ENCODE measurements at regions of chr12 and their contacts with region 1.

Region 1: DNA sequence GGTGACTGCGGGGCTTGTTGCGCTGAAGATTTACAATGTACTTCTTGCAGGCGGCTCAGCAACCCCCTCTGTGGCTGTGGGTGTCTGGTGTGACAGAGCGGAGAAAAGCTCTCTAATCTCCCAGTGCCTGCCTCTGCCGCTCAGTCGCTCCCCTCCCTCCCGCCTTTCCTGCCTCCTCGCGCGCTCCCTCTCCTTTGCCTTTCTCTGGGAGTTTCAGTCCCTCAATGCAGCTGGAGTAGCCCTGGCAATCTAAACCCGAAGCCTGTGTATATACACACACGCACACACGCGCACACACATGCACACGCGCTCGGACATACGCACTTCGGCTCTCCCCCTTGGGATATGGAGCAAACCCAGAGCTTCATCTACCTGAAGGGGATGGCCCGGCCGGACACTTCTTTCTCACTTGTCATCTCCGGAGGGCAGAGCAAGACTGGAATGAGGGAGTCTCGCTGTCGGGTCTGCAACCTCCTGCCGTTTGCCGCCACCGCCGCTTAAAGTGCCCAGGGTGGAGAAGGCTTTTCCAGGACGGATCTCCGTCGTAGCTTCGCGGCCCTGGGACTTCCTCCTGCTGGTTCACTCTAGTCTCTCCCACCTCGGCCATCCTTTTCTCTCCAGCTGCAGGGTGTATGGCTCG is 599 bp upstream of the TRHDE start:
- DNase-seq: peak; percentile 63
- ATAC-seq: peak; percentile 32
- H3K4me3 ChIP-seq: peak overlapping the region; percentile 92
- H3K27ac ChIP-seq: peak overlapping the region; percentile 99
- H3K4me1 ChIP-seq: peaks cover 5% of the 10 kb centered on the region
- H3K27me3 ChIP-seq: no peaks in the 10 kb centered on the region
- CTCF ChIP-seq: peak; percentile 23; the same call in 1 of the 2 replicates
- POLR2A ChIP-seq: no peak
- RAD21 ChIP-seq: no peak

Region 2: DNA sequence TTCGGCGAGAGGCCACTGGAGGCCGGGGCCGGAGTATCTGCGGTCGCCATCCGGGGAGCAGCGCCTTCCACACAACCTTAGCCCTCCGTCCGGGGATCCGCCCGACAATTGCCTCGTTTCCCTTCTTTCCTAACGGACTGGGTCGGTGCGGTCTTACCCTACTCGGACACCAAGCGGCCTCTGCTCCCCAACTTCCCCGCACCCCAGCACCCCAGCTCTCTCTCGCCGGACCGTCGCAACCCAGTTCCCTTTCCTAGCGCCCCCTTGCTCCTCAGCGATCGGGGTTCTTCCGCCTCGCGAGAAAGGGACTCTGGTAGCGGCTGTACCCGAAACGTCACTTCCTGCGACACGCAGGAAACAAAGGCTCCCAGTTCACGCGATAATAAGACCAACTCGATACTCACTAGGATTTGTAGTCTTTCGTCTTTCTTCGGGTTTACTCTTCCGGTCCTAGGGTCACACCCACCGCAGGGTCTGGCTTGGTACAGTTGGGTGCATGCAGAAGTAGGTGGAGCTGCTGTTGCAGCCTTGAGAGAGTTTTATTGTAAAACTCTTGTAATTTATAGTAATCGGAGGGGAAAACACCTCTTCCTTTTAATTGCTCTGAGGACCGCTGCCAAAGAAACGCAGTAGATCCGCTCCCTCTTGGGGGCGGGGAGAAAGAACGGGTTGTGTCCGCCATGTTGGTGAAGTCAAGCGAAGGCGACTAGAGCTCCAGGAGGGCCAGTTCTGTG is 607.8 kb before region 1 on chr12 and contains the start of gene ZFC3H1:
- CTCF ChIA-PET with region 1: no interaction called
- POLR2A ChIA-PET with region 1: no interaction called
- dilution Hi-C with region 1: no loop called
- in situ Hi-C with region 1: loop called (anchors 25 kb)
- intact Hi-C with region 1: no loop called
- DNase-seq: peak; percentile 100
- ATAC-seq: peak; percentile 91
- H3K4me3 ChIP-seq: peak within 1 kb of the TSS; percentile 68
- H3K27ac ChIP-seq: peak within 1 kb of the TSS; percentile 95
- H3K4me1 ChIP-seq: no peaks in the 10 kb centered on the region
- H3K27me3 ChIP-seq: no peaks in the 10 kb centered on the region
- CTCF ChIP-seq: peak; percentile 43
- POLR2A ChIP-seq: peak; percentile 95
- RAD21 ChIP-seq: no peak
- total RNA-seq, gene ZFC3H1: 16.8 and 28.6 TPM in 2 replicates

Region 3: GRCh38 chr12:71888521-71888920 is 383.1 kb before region 1 on chr12:
- CTCF ChIA-PET with region 1: no interaction called
- POLR2A ChIA-PET with region 1: no interaction called
- dilution Hi-C with region 1: no loop called
- in situ Hi-C with region 1: no loop called
- intact Hi-C with region 1: no loop called
- DNase-seq: no peak
- ATAC-seq: no peak
- H3K4me3 ChIP-seq: no peak overlapping the region
- H3K27ac ChIP-seq: no peak overlapping the region
- H3K4me1 ChIP-seq: no peaks in the 10 kb centered on the region
- H3K27me3 ChIP-seq: no peaks in the 10 kb centered on the region
- CTCF ChIP-seq: no peak
- POLR2A ChIP-seq: no peak
- RAD21 ChIP-seq: no peak

Region 4: GRCh38 chr12:71958993-71959578 is 312.5 kb before region 1 on chr12:
- CTCF ChIA-PET with region 1: no interaction called
- POLR2A ChIA-PET with region 1: no interaction called
- dilution Hi-C with region 1: no loop called
- in situ Hi-C with region 1: no loop called
- intact Hi-C with region 1: loop called (anchors 10 kb)
- DNase-seq: peak; percentile 79
- ATAC-seq: peak; percentile 61
- H3K4me3 ChIP-seq: no peak overlapping the region
- H3K27ac ChIP-seq: peak overlapping the region; percentile 36; the same call in 1 of the 2 replicates
- H3K4me1 ChIP-seq: peaks cover 12% of the 10 kb centered on the region
- H3K27me3 ChIP-seq: no peaks in the 10 kb centered on the region
- CTCF ChIP-seq: no peak
- POLR2A ChIP-seq: no peak
- RAD21 ChIP-seq: no peak

Region 5: GRCh38 chr12:72017054-72017651 is 254.4 kb before region 1 on chr12:
- CTCF ChIA-PET with region 1: interaction called, 3 read pairs
- POLR2A ChIA-PET with region 1: no interaction called
- dilution Hi-C with region 1: no loop called
- in situ Hi-C with region 1: no loop called
- intact Hi-C with region 1: loop called (anchors 5 kb)
- DNase-seq: peak; percentile 72
- ATAC-seq: peak; percentile 100
- H3K4me3 ChIP-seq: no peak overlapping the region
- H3K27ac ChIP-seq: no peak overlapping the region
- H3K4me1 ChIP-seq: peaks cover under 1% of the 10 kb centered on the region; the same call in 1 of the 2 replicates
- H3K27me3 ChIP-seq: no peaks in the 10 kb centered on the region
- CTCF ChIP-seq: peak; percentile 79
- POLR2A ChIP-seq: no peak
- RAD21 ChIP-seq: peak; percentile 89

Region 6: DNA sequence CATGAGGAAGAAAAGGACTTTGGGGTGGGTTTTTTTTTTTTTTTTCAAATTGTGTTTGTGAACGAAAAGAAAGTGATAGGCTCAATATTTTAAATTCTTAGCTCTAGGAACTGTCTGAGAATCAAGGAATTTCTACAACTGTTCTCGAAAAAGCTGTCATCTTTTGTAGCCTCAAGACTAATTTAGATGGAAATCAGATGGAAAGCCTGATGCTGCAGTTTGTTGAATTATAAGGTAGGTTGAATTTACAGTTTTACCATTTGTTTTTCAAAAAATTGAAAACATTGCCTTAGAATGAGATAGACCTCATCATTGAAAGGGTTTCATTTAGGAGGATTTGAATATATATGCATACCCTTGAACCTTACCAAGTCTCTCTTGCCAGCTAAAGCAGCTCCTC is 108.7 kb before region 1 on chr12:
- CTCF ChIA-PET with region 1: no interaction called
- POLR2A ChIA-PET with region 1: no interaction called
- dilution Hi-C with region 1: no loop called
- in situ Hi-C with region 1: no loop called
- intact Hi-C with region 1: no loop called
- DNase-seq: no peak
- ATAC-seq: no peak
- H3K4me3 ChIP-seq: no peak overlapping the region
- H3K27ac ChIP-seq: no peak overlapping the region
- H3K4me1 ChIP-seq: no peaks in the 10 kb centered on the region
- H3K27me3 ChIP-seq: no peaks in the 10 kb centered on the region
- CTCF ChIP-seq: no peak
- POLR2A ChIP-seq: no peak
- RAD21 ChIP-seq: no peak

Region 7: DNA sequence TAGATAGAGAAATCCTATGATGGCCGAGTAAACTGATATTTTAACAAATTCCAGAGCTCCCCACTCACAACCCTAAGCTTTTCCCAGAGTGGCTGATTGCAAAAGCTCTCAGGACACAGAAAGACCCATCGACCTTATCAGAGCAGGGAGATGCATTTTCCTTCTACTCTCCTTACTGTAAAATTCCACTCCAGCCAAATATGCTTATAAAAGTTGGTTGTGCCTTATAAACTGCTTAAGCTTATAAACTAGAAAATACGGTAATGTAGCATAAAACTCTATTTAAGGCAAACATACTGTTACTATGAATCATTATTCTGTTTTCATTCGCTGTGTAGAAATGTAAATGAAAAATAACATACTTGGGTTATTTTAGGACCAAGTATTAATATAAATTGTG is 41.0 kb before region 1 on chr12:
- CTCF ChIA-PET with region 1: interaction called, 4 read pairs
- POLR2A ChIA-PET with region 1: no interaction called
- dilution Hi-C with region 1: no loop called
- in situ Hi-C with region 1: no loop called
- intact Hi-C with region 1: loop called (anchors 2 kb)
- DNase-seq: peak; percentile 95
- ATAC-seq: peak; percentile 89
- H3K4me3 ChIP-seq: no peak overlapping the region
- H3K27ac ChIP-seq: peak overlapping the region; percentile 2; the same call in 1 of the 2 replicates
- H3K4me1 ChIP-seq: peaks cover 13% of the 10 kb centered on the region
- H3K27me3 ChIP-seq: no peaks in the 10 kb centered on the region
- CTCF ChIP-seq: no peak
- POLR2A ChIP-seq: no peak
- RAD21 ChIP-seq: no peak

Region 8: DNA sequence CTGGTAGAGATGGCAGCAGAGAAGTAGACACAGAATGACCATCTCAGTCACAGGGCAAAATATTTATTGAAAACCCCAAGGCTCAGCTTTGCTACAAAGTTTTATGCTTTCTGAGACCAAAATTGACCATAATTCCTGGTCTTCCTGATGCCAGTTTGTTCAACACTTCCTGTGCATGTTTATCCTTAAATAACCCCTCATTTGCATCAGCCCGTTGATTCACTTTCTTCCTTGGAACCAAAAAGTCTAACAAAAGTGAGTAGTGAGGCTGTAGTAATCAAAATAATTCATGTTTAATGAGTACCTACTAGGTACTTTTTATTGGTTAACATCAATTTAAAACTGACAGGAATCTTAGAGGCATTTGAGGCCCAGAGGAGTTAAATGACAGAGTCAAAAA is 52.3 kb after region 1 on chr12:
- CTCF ChIA-PET with region 1: interaction called, 3 read pairs
- POLR2A ChIA-PET with region 1: no interaction called
- dilution Hi-C with region 1: no loop called
- in situ Hi-C with region 1: no loop called
- intact Hi-C with region 1: loop called (anchors 10 kb)
- DNase-seq: peak; percentile 64
- ATAC-seq: peak; percentile 21; the same call in 1 of the 2 replicates
- H3K4me3 ChIP-seq: no peak overlapping the region
- H3K27ac ChIP-seq: peak overlapping the region; percentile 44; the same call in 1 of the 2 replicates
- H3K4me1 ChIP-seq: peaks cover 9% of the 10 kb centered on the region; the same call in 1 of the 2 replicates
- H3K27me3 ChIP-seq: no peaks in the 10 kb centered on the region
- CTCF ChIP-seq: no peak
- POLR2A ChIP-seq: no peak
- RAD21 ChIP-seq: no peak

Region 9: DNA sequence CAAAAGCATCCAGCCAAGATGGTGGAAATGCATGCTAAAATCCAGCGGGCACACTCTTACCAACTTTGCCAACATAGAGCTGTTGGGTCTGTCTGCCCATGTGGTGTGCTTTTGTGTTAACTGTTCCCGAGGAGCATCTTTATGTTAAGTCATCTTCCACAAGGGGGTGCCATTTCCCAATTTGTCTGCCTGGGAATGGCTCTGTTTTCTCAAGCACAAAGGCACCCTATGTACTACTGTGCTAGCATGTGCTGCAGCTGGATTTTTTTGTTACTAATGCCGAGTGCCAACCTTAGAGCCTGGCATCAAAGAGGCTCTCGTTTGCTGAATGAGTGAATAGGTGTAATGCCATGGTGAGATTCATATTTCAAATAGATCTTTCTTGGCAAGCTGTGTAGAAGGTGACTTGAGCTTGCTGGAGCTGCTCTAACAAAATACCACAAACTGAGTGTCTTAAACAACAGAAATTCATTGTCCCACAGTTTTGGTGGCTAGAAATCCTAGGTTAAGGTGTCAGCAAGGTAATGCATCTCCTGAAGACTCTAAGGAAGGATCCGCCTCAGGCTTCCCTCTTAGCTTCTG is 74.9 kb after region 1 on chr12:
- CTCF ChIA-PET with region 1: interaction called, 4 read pairs
- POLR2A ChIA-PET with region 1: no interaction called
- dilution Hi-C with region 1: no loop called
- in situ Hi-C with region 1: no loop called
- intact Hi-C with region 1: loop called (anchors 5 kb)
- DNase-seq: peak; percentile 85
- ATAC-seq: peak; percentile 98
- H3K4me3 ChIP-seq: no peak overlapping the region
- H3K27ac ChIP-seq: no peak overlapping the region
- H3K4me1 ChIP-seq: peaks cover 4% of the 10 kb centered on the region
- H3K27me3 ChIP-seq: no peaks in the 10 kb centered on the region
- CTCF ChIP-seq: peak; percentile 71
- POLR2A ChIP-seq: no peak
- RAD21 ChIP-seq: peak; percentile 82

Region 10: GRCh38 chr12:72465940-72466637 is 194.5 kb after region 1 on chr12:
- CTCF ChIA-PET with region 1: no interaction called
- POLR2A ChIA-PET with region 1: no interaction called
- dilution Hi-C with region 1: no loop called
- in situ Hi-C with region 1: no loop called
- intact Hi-C with region 1: no loop called
- DNase-seq: no peak
- ATAC-seq: no peak
- H3K4me3 ChIP-seq: no peak overlapping the region
- H3K27ac ChIP-seq: no peak overlapping the region
- H3K4me1 ChIP-seq: no peaks in the 10 kb centered on the region
- H3K27me3 ChIP-seq: no peaks in the 10 kb centered on the region
- CTCF ChIP-seq: no peak
- POLR2A ChIP-seq: no peak
- RAD21 ChIP-seq: no peak

Region 11: GRCh38 chr12:72499244-72499643 is 227.7 kb after region 1 on chr12:
- CTCF ChIA-PET with region 1: no interaction called
- POLR2A ChIA-PET with region 1: no interaction called
- dilution Hi-C with region 1: no loop called
- in situ Hi-C with region 1: no loop called
- intact Hi-C with region 1: no loop called
- DNase-seq: peak; percentile 33
- ATAC-seq: no peak
- H3K4me3 ChIP-seq: no peak overlapping the region
- H3K27ac ChIP-seq: no peak overlapping the region
- H3K4me1 ChIP-seq: no peaks in the 10 kb centered on the region
- H3K27me3 ChIP-seq: no peaks in the 10 kb centered on the region
- CTCF ChIP-seq: no peak
- POLR2A ChIP-seq: no peak
- RAD21 ChIP-seq: no peak